PC-3 (cell line): ENCODE measurements at regions of chr4 and their contacts with region 1.

Region 1: DNA sequence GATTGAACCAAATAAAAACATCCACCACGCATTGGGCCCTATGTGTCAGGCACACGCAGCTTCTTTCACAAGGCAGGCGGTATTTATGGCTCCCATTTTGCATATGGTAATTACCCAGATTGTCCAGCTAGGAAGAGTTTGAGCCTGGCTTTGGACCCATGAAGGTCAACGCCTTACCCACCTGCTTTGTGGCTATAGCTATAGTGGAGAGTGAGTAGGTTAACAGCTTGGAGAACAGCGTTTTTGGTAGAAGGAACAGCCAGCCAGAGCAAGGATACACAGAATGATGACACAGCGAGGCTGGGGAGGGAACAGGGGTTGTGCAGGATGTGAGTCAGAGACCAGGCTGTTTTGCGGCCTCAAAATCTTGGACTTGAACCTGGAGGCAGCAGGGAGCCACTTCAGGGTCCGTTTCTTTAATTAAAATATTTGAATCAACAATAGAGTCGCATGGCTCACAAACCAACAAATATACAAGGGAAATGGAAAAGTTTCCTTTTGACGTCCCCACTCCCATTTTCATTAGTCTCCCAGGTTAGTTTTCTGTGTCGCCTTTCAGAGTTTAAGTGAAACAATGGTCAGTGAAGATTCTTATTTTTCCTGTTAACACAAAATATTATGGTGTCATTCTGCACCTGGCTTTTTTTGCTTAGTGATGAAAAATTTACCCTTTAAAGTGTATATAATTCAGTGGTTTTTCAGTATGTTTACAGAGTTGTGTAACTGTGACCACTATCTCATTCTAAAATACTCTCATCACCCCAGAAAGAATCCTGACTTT is 118.2 kb upstream of the STX18 start:
- DNase-seq: peak; percentile 81
- ATAC-seq: peak; percentile 89
- H3K4me3 ChIP-seq: peak overlapping the region; percentile 37; the same call in 1 of the 2 replicates
- H3K27ac ChIP-seq: peak overlapping the region; percentile 88
- H3K4me1 ChIP-seq: peaks cover 33% of the 10 kb centered on the region
- H3K27me3 ChIP-seq: no peaks in the 10 kb centered on the region
- CTCF ChIP-seq: no peak

Region 2: GRCh38 chr4:4541661-4542570 is 118.1 kb before region 1 on chr4 and contains the start of gene STX18:
- CTCF ChIA-PET with region 1: no interaction called
- POLR2A ChIA-PET with region 1: no interaction called
- intact Hi-C with region 1: loop called (anchors 10 kb)
- DNase-seq: peak; percentile 76
- ATAC-seq: peak; percentile 78
- H3K4me3 ChIP-seq: peak within 1 kb of the TSS; percentile 96
- H3K27ac ChIP-seq: peak within 1 kb of the TSS; percentile 71
- H3K4me1 ChIP-seq: peaks cover 11% of the 10 kb centered on the region
- H3K27me3 ChIP-seq: no peaks in the 10 kb centered on the region
- CTCF ChIP-seq: no peak
- total RNA-seq, gene STX18: 24.0 and 25.0 TPM in 2 replicates

Region 3: GRCh38 chr4:4859390-4859842 is 199.4 kb after region 1 on chr4 and contains the start of gene MSX1:
- CTCF ChIA-PET with region 1: interaction called, 5 read pairs
- POLR2A ChIA-PET with region 1: no interaction called
- intact Hi-C with region 1: loop called (anchors 5 kb)
- DNase-seq: peak; percentile 75
- ATAC-seq: peak; percentile 94
- H3K4me3 ChIP-seq: peak within 1 kb of the TSS; percentile 86
- H3K27ac ChIP-seq: no peak within 1 kb of the TSS
- H3K4me1 ChIP-seq: peaks cover 3% of the 10 kb centered on the region; the same call in 1 of the 2 replicates
- H3K27me3 ChIP-seq: peaks cover 22% of the 10 kb centered on the region
- CTCF ChIP-seq: no peak
- total RNA-seq, gene MSX1: 7.5 and 10.4 TPM in 2 replicates